H1 (cell line): ENCODE measurements at regions of chr15 and their contacts with region 1.

Region 1: GRCh38 chr15:57522148-57522547 is 69.6 kb upstream of the MYZAP start:
- DNase-seq: no peak
- H3K4me3 ChIP-seq: no peak overlapping the region
- H3K27ac ChIP-seq: no peak overlapping the region
- H3K4me1 ChIP-seq: peaks cover 0 to 2% (median 0%) of the 10 kb centered on the region in 4 experiments; a peak in 1 of 7 replicates
- H3K27me3 ChIP-seq: no peaks in the 10 kb centered on the region
- CTCF ChIP-seq: no peak
- EP300 ChIP-seq: no peak
- POLR2A ChIP-seq: no peak
- RAD21 ChIP-seq: no peak

Region 2: DNA sequence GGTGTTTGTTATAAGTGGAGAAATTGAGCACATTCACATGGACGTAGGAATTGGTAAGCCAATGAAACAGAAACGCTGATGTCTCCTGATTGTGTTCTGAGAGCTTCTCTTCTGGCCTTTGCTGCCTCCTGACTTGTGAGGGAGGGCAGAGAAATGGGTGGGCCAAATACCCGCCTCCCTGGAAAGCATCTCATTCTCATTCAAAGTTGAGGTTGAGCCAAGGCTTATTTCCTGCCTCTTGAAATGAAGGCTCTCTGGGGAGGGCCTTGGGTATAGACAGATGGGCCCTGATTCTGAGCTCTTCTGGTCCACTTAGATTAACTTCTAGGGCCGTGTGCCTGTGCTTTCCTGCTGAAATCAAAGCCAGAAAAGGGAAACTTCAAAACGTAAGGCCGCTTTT is 12.1 kb after region 1 on chr15:
- CTCF ChIA-PET with region 1: interaction called, 108 read pairs
- POLR2A ChIA-PET with region 1: interaction called, 9 read pairs
- DNase-seq: no peak
- H3K4me3 ChIP-seq: no peak overlapping the region
- H3K27ac ChIP-seq: no peak overlapping the region
- H3K4me1 ChIP-seq: peaks cover 0 to 5% (median 3%) of the 10 kb centered on the region in 4 experiments; a peak in 2 of 7 replicates
- H3K27me3 ChIP-seq: no peaks in the 10 kb centered on the region
- CTCF ChIP-seq: no peak
- EP300 ChIP-seq: no peak
- POLR2A ChIP-seq: no peak
- RAD21 ChIP-seq: no peak

Region 3: GRCh38 chr15:57541805-57542504 is 19.8 kb after region 1 on chr15:
- CTCF ChIA-PET with region 1: interaction called, 108 read pairs
- POLR2A ChIA-PET with region 1: interaction called, 9 read pairs
- DNase-seq: peak in 1 of 2 experiments; percentile 83
- H3K4me3 ChIP-seq: no peak overlapping the region
- H3K27ac ChIP-seq: no peak overlapping the region
- H3K4me1 ChIP-seq: 0 out of 7 replicates have a peak, but pooled peaks cover 0 to 1% (median 0%) of the 10 kb centered on the region in 4 experiments
- H3K27me3 ChIP-seq: no peaks in the 10 kb centered on the region
- CTCF ChIP-seq: peak; percentile 63 to 85 (median 70)
- EP300 ChIP-seq: no peak
- POLR2A ChIP-seq: no peak
- RAD21 ChIP-seq: peak; percentile 56 to 65